Activated CD4-positive, alpha-beta memory T cell treated with anti-CD3 and anti-CD28 coated beads for 36 hours (primary cell): ENCODE measurements at regions of chr17 and their contacts with region 1.

Region 1: DNA sequence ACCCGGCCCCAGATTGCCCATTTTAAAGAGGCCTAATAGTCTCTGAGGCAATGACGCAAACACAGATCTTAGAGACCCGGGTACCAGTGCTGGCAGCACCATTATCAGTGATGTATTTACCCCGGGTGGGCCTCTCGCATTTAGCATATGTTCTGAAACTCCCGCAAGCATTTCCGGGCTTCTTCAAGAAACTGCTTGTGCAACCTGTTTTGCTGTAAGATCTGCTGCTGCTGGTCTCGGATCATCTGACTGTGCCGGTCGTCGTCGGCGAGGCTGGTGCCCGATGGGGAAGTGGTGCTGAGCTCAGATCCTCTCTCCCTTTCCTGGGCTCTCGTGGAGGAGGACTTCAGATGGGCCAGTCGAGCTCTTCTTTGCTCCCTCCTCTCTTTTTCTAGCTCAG is 12.5 kb downstream of the CEP295NL start:
- DNase-seq: peak; percentile 81
- H3K4me3 Mint-ChIP-seq: no peak overlapping the region
- H3K27ac Mint-ChIP-seq: peak overlapping the region; percentile 35
- H3K4me1 Mint-ChIP-seq: peaks cover 31% of the 10 kb centered on the region
- H3K27me3 Mint-ChIP-seq: peaks cover 3% of the 10 kb centered on the region

Region 2: DNA sequence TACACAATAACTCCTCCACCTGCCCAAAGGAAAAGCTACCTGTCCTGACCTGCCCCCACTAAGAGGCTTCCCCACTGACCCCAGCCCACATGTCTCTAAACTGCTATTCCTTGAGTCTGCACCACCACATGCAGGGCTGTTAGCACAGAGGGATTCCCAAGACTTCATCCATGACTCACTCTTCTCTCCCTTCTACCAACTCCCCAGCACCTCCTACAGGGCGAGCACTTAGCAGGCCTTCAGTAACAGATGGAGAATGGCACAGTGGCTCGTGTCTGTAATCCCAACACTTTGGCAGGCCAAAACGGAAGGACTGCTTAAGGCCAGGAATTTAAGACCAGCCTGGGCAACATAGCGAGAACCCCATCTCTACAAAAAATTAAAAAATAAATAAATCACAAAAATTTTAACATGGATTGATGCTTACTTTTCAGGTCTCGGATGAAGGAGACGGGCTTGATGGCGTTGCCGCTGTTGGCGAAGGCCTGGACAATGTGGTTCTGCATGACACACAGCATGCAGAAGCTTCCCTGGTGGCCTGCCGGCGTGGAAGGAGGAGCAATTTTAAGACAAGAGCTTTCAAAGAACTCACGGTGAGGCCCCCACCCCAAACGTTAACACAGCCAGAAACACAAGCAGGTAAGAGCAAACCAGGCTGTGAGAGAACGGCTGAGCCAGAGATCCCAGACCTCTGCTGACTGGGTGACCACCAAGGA is 61.9 kb before region 1 on chr17:
- CTCF ChIA-PET with region 1: no interaction called
- POLR2A ChIA-PET with region 1: no interaction called
- intact Hi-C with region 1: no loop called
- DNase-seq: peak; percentile 56
- H3K4me3 Mint-ChIP-seq: no peak overlapping the region
- H3K27ac Mint-ChIP-seq: peak overlapping the region; percentile 3
- H3K4me1 Mint-ChIP-seq: peaks cover 10% of the 10 kb centered on the region
- H3K27me3 Mint-ChIP-seq: no peaks in the 10 kb centered on the region

Region 3: DNA sequence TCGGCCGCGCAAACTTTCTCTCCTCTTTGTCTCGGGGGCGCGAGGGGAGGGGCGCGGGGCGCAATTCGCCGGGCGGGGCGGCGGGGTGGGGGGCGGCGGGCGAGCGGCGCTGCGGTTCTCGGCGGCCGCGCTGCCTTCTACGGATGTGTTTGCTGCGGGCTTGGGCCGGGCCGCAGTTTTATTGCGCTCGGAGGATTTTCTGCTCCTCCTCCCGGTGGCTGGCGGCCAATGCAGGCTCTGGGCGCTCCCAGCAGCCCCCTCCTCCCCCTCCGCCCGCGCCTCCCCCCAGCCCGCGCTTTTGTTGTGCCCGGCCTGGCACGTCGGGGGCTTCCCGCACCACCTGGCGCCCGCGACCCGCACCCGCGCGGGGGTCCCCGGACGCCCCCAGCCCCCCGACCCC is 34.7 kb after region 1 on chr17 and contains the start of gene TIMP2:
- CTCF ChIA-PET with region 1: no interaction called
- POLR2A ChIA-PET with region 1: no interaction called
- intact Hi-C with region 1: loop called (anchors 5 kb)
- DNase-seq: peak; percentile 74
- H3K4me3 Mint-ChIP-seq: peak within 1 kb of the TSS; percentile 26
- H3K27ac Mint-ChIP-seq: no peak within 1 kb of the TSS
- H3K4me1 Mint-ChIP-seq: peaks cover 10% of the 10 kb centered on the region
- H3K27me3 Mint-ChIP-seq: peaks cover 17% of the 10 kb centered on the region
- total RNA-seq, gene TIMP2: 1.1 TPM

Region 4: GRCh38 chr17:78940708-78941107 is 50.2 kb after region 1 on chr17:
- CTCF ChIA-PET with region 1: no interaction called
- POLR2A ChIA-PET with region 1: no interaction called
- intact Hi-C with region 1: no loop called
- DNase-seq: no peak
- H3K4me3 Mint-ChIP-seq: no peak overlapping the region
- H3K27ac Mint-ChIP-seq: no peak overlapping the region
- H3K4me1 Mint-ChIP-seq: no peaks in the 10 kb centered on the region
- H3K27me3 Mint-ChIP-seq: peaks cover 2% of the 10 kb centered on the region

Region 5: DNA sequence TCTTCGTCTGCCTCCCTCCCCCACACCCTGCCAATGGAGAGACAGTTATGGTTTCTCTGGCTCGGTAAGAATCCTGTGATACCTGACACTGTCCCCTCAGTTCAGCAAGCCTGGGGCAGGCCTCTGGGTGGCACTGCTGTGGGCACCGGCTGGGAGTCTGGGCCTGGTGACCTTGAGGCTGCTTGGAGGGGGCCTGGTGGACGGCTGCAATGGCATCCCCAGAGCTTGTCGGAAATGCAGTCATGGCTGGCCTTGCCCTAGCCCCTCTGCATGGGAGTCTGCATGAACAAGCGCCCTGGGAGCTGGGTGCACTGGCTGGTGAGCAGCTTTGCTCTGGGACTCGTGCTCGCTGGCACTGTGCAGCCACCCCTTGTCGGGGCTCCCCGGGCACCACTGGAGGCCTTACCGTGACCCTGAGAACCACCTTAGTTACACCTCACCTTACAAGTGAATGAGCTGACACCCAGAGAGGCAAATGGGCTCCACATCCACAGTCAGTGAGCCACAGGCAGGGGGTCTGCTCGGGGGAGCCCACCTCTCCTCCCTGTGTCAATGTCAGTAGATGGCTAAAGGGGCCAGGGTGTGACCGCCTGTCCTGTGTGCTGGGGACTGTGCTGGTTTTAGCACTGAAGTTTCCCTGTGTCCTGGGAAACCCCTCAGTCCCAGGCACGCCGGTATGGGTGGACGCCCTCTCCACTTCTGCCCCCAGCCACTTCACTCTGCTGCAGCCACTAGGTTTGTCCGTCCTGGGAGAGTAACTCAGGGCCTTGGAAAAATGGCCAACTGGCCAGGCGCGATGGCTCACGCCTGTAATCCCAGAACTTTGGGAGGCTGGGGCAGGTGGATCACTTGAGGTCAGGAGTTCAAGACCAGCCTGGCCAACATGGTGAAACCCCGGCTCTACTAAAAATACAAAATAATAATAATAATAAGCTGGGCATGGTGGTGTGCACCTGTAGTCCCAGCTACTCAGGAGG is 87.8 kb after region 1 on chr17:
- CTCF ChIA-PET with region 1: no interaction called
- POLR2A ChIA-PET with region 1: no interaction called
- intact Hi-C with region 1: no loop called
- DNase-seq: no peak
- H3K4me3 Mint-ChIP-seq: no peak overlapping the region
- H3K27ac Mint-ChIP-seq: no peak overlapping the region
- H3K4me1 Mint-ChIP-seq: peaks cover 15% of the 10 kb centered on the region
- H3K27me3 Mint-ChIP-seq: no peaks in the 10 kb centered on the region